Adrenal gland (tissue), 19 donors: ENCODE measurements at regions of chr1 and their contacts with region 1.

Region 1: GRCh38 chr1:214116258-214116657 is 128.5 kb downstream of the PROX1 start:
- DNase-seq: peak in 4 of 7 donors; percentile 24 to 40 (median 31)
- H3K4me3 ChIP-seq: no peak overlapping the region
- H3K27ac ChIP-seq: no peak overlapping the region
- H3K4me1 ChIP-seq: peaks cover 0 to 3% of the 10 kb centered on the region in 2 donors
- H3K27me3 ChIP-seq: no peaks in the 10 kb centered on the region
- CTCF ChIP-seq: no peak
- POLR2A ChIP-seq: no peak

Region 2: DNA sequence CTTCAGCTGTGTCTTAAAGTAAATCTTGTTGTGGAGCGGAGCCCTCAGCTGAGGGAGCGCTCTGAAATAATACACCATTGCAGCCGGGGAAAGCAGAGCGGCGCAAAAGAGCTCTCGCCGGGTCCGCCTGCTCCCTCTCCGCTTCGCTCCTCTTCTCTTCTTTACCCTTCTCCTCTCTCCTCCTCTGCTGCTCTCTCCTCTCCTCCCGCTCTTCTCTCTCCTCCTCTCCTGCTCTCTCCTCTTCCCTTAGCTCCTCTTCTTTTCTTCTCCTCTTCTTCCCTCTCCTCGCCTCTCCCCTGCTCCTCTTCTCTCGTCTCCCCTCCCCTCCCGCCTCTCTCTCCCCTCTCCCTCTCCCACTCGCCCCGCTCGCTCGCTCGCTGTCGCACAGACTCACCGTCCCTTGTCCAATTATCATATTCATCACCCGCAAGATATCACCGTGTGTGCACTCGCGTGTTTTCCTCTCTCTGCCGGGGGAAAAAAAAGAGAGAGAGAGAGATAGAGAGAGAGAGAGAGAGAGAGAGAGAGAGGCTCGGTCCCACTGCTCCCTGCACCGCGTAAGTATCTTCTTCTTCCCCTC is 128.2 kb before region 1 on chr1 and contains the start of gene PROX1:
- intact Hi-C with region 1: loop called (anchors 5 to 10 kb)
- DNase-seq: peak; percentile 50 to 74 (median 56)
- H3K4me3 ChIP-seq: peak within 1 kb of the TSS; percentile 56 to 92 (median 86)
- H3K27ac ChIP-seq: peak within 1 kb of the TSS; percentile 74 to 94 (median 87)
- H3K4me1 ChIP-seq: peaks cover 7 to 19% of the 10 kb centered on the region in 2 donors
- H3K27me3 ChIP-seq: peaks cover 4% of the 10 kb centered on the region
- CTCF ChIP-seq: peak in 2 of 6 experiments; percentile 11 to 25
- POLR2A ChIP-seq: peak; percentile 73 to 97
- total RNA-seq, gene PROX1: 14.3 to 91.7 (median 32.9) TPM